CD8-positive, alpha-beta T cell (primary cell): ENCODE measurements at regions of chr15 and their contacts with region 1.

Region 1: DNA sequence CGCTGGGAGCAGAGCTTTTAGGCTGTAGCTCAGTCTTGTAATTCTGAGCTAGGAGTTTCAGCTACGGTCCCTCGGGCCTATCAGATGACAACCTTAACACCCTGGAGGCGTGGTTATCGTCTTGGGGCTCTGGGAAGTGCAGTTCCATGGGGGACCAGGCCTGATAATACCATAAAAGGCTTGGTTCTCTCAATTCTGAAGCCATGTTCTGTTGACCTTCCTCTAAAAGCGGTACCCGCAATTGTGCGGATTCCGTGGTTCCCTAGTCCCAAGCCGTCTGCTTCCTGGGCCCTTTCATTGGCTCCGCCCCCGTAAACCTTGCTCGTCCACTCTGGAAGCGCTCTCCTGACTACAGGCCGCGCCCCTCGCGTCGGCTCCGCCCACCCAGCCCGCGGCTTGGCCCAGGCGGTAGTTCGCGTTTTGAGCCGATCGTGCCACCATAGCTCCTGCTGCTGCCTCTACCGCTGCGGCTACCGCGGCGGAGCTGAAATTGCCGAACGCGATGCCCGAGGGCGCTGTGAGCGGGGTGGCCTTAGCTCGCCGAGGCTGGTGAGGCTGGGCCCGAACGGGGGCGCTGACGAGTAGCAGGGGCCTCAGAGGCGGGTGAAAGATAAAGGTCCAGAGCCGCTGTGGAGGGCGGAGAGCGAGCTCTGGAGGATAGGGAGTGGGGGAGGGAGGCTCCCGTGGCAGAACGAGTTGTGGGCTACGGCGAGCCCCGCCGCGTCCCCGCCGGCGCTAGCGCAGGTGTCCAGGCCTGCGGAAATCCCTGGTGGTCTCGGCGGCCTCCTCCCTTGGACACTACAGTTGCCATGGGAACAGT is at the start of gene MAPKBP1:
- DNase-seq: peak; percentile 93 to 100 (median 97)
- ATAC-seq: peak; percentile 90
- H3K4me3 ChIP-seq: peak within 1 kb of the TSS; percentile 70 to 91
- H3K4me3 Mint-ChIP-seq: peak within 1 kb of the TSS; percentile 95
- H3K27ac ChIP-seq: peak within 1 kb of the TSS; percentile 45 to 84
- H3K27ac Mint-ChIP-seq: peak within 1 kb of the TSS; percentile 95
- H3K4me1 ChIP-seq: peaks cover 46% of the 10 kb centered on the region
- H3K4me1 Mint-ChIP-seq: peaks cover 60% of the 10 kb centered on the region
- H3K27me3 ChIP-seq: no peaks in the 10 kb centered on the region
- H3K27me3 Mint-ChIP-seq: no peaks in the 10 kb centered on the region
- CTCF ChIP-seq: peak; percentile 47
- total RNA-seq, gene MAPKBP1: 24.2 to 25.3 TPM

Region 2: GRCh38 chr15:41557673-41558399 is 216.4 kb before region 1 on chr15:
- CTCF ChIA-PET with region 1: interaction called, 3 read pairs
- POLR2A ChIA-PET with region 1: no interaction called
- intact Hi-C with region 1: loop called (anchors 1 to 5 kb)
- DNase-seq: peak; percentile 47 to 90 (median 77)
- ATAC-seq: peak; percentile 88
- H3K4me3 ChIP-seq: peak overlapping the region; percentile 4 to 41
- H3K4me3 Mint-ChIP-seq: peak overlapping the region; percentile 86
- H3K27ac ChIP-seq: peak overlapping the region in 1 of 2 experiments; percentile 69
- H3K27ac Mint-ChIP-seq: peak overlapping the region; percentile 84
- H3K4me1 ChIP-seq: peaks cover 19% of the 10 kb centered on the region
- H3K4me1 Mint-ChIP-seq: peaks cover 14% of the 10 kb centered on the region
- H3K27me3 ChIP-seq: peaks cover 6 to 10% of the 10 kb centered on the region in 2 experiments
- H3K27me3 Mint-ChIP-seq: peaks cover 18% of the 10 kb centered on the region
- CTCF ChIP-seq: peak; percentile 88

Region 3: GRCh38 chr15:41594801-41595746 is 179.2 kb before region 1 on chr15:
- CTCF ChIA-PET with region 1: no interaction called
- POLR2A ChIA-PET with region 1: no interaction called
- intact Hi-C with region 1: no loop called
- DNase-seq: no peak
- ATAC-seq: no peak
- H3K4me3 ChIP-seq: no peak overlapping the region
- H3K4me3 Mint-ChIP-seq: no peak overlapping the region
- H3K27ac ChIP-seq: no peak overlapping the region
- H3K27ac Mint-ChIP-seq: no peak overlapping the region
- H3K4me1 ChIP-seq: no peaks in the 10 kb centered on the region
- H3K4me1 Mint-ChIP-seq: no peaks in the 10 kb centered on the region
- H3K27me3 ChIP-seq: no peaks in the 10 kb centered on the region
- H3K27me3 Mint-ChIP-seq: peaks cover 12% of the 10 kb centered on the region
- CTCF ChIP-seq: no peak

Region 4: DNA sequence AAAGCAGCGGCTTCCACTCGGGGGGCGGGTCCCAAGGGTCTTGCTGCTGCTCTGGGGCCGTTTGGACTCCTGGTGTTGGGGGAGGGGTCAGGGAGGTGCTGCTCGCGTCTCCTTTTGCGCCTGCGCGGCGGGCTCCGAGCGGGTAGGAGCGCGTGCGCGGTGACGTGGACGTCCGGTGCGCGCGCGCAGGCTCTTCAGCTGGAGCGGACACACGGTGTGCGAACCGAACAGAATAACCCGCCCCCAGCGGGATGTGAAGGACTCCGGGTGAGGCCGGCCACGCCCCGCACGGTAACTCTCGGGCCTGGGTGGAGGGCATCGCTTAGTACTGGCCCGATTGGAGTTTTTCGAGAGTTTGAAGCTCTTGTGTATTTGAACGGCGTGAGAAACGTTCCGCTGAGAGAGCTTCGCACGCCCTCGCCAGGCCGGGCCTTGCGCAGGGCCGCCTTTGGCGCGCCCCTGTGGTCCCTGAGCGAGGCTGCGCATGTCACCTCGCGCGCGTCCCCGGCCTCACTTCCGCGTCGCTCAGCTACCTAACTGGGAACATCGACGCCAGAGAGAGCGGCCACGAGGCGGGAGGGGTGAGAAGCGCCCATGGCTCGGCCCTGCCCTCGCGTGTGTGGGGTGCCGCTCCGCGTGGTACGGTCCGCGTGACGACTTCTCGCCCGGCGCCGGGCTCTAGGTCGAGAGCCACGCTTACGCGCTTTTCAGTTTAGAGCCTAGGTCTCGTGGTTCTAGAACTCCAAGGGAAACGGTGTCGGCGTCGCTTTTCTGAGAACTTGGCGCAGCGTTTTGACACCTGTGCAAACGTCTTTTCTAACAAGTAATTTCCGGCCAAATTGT is 113.8 kb before region 1 on chr15 and contains the start of gene MGA:
- CTCF ChIA-PET with region 1: interaction called, 5 read pairs
- POLR2A ChIA-PET with region 1: interaction called, 4 read pairs
- intact Hi-C with region 1: loop called in 1 of 2 experiments (anchors 1 kb)
- DNase-seq: peak; percentile 74 to 95 (median 89)
- ATAC-seq: peak; percentile 79
- H3K4me3 ChIP-seq: peak within 1 kb of the TSS; percentile 56 to 62
- H3K4me3 Mint-ChIP-seq: peak within 1 kb of the TSS; percentile 86
- H3K27ac ChIP-seq: peak within 1 kb of the TSS; percentile 90 to 98
- H3K27ac Mint-ChIP-seq: peak within 1 kb of the TSS; percentile 89
- H3K4me1 ChIP-seq: peaks cover 31% of the 10 kb centered on the region
- H3K4me1 Mint-ChIP-seq: peaks cover 54% of the 10 kb centered on the region
- H3K27me3 ChIP-seq: peaks cover 0 to 3% of the 10 kb centered on the region in 2 experiments
- H3K27me3 Mint-ChIP-seq: no peaks in the 10 kb centered on the region
- CTCF ChIP-seq: no peak
- total RNA-seq, gene MGA: 32.9 to 35.7 TPM

Region 5: DNA sequence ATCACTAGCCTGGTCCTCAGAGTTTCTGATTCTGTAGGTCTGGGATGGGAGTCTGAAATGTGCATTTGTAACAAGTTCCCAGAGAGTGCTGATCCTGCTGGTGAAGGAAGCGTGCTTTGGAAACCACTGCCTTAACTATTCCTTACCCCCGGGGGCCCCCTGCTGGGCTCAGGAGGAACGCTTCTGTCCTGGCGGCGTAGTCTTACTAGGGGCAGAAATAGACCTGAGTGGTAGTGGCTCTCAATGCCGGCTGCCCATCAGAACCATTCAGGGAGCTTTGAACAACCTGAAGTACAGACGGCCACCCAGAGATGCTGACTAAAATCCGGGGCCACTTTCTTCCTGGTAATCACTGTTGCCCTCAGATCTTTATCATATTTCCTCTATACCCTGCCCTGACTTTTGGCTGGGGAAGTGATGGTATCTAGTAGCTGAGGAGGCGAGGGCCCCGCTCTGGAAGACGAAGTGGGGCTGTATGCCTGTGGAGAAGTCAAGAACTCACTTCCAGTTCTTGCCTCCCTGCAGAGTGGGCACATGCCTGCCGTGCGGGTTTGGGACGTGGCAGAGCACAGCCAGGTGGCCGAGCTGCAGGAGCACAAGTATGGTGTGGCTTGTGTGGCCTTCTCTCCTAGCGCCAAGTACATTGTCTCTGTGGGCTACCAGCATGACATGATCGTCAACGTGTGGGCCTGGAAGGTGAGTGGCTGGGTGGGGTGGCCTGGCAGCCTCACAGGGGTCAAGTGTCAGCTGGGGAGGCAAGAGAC is 37.3 kb after region 1 on chr15:
- CTCF ChIA-PET with region 1: interaction called, 314 read pairs
- POLR2A ChIA-PET with region 1: interaction called, 31 read pairs
- intact Hi-C with region 1: loop called (anchors 1 kb)
- DNase-seq: peak; percentile 53 to 82 (median 77)
- ATAC-seq: peak; percentile 98
- H3K4me3 ChIP-seq: no peak overlapping the region
- H3K4me3 Mint-ChIP-seq: no peak overlapping the region
- H3K27ac ChIP-seq: no peak overlapping the region
- H3K27ac Mint-ChIP-seq: peak overlapping the region; percentile 14
- H3K4me1 ChIP-seq: peaks cover 17% of the 10 kb centered on the region
- H3K4me1 Mint-ChIP-seq: peaks cover 16% of the 10 kb centered on the region
- H3K27me3 ChIP-seq: no peaks in the 10 kb centered on the region
- H3K27me3 Mint-ChIP-seq: no peaks in the 10 kb centered on the region
- CTCF ChIP-seq: peak; percentile 86

Region 6: DNA sequence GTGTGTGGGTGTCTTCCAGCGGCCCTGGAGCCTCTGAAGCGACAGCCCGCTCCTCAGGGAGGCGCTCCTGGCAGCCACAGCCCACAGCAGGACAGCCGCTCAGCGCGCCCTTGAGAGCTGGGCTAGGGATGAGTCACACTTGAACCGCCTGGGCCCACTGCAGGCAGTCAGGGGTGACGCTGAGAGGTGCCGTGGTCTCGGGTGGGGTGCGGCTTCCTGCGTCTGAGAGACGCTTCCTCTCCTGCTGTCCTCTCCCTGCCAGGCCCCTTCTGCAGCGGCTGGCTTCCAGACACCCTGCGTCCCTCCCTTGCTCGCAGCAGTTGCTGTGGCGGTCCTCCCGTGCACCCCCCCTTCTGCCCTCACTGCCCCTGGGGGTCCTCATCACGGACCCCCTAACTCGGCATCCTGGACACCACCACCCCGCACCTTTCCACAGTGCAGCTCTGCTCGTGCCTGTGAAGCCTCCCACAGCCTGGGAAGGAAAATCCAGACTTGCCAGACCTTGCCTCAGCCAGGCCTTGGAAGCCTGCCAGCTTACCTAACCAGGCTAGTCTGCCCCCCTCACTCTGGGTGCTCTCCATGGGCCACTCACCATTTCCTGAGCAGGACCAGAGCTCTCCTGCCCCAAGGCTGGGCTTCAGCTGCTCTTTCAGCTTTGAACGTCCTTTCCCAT is 120.7 kb after region 1 on chr15:
- CTCF ChIA-PET with region 1: interaction called, 113 read pairs
- POLR2A ChIA-PET with region 1: interaction called, 12 read pairs
- intact Hi-C with region 1: loop called in 1 of 2 experiments (anchors 2 kb)
- DNase-seq: peak; percentile 82 to 96 (median 94)
- ATAC-seq: peak; percentile 95
- H3K4me3 ChIP-seq: peak overlapping the region; percentile 45 to 53
- H3K4me3 Mint-ChIP-seq: peak overlapping the region; percentile 78
- H3K27ac ChIP-seq: peak overlapping the region; percentile 80 to 95
- H3K27ac Mint-ChIP-seq: peak overlapping the region; percentile 98
- H3K4me1 ChIP-seq: peaks cover 30% of the 10 kb centered on the region
- H3K4me1 Mint-ChIP-seq: peaks cover 36% of the 10 kb centered on the region
- H3K27me3 ChIP-seq: no peaks in the 10 kb centered on the region
- H3K27me3 Mint-ChIP-seq: no peaks in the 10 kb centered on the region
- CTCF ChIP-seq: no peak

Region 7: DNA sequence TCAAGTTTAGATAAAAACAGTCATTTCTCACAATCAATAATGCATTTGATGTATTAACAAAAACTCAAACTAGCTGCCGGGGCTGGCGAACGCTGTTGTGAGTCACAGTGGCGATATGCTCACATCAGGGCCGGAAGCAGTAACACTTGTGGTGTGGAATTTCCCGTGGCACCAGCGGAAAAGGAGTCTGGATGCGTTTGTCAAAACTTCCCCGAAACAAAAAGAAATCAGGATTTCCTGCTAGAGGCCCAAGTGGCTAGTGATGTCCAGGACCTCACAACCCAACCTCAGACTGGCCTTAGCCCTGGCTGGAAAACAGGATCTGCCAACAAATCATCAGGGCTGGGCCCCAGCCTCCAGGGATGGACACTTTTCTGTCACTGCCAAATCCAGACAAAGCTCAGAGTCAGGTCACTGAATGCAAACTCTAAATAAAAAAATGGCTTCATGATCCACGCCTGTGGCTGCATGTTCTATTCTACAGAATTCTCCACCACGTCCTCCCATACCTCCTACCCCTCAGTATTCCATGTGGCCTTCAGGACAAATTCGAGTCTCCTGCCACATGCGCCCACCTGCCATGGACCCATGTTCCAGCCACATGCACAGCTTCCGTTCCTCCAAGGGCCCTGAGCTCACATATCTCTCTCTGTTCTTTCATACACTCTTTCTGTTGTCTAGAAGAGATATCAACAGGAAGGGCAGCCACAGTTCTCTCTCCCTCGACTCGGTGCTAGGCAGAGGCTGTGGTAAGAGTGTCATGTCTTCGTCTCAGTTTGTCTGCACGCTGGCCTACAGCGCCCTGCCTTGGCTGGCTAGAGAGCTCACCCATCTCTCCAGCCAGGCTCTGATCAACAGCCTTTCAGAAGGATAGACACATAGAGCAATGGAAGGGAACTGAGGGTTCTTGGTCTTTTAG is 162.6 kb after region 1 on chr15:
- CTCF ChIA-PET with region 1: interaction called, 34 read pairs
- POLR2A ChIA-PET with region 1: interaction called, 19 read pairs
- intact Hi-C with region 1: loop called (anchors 1 to 10 kb)
- DNase-seq: peak; percentile 52 to 94 (median 74)
- ATAC-seq: peak; percentile 80
- H3K4me3 ChIP-seq: peak overlapping the region; percentile 9 to 27
- H3K4me3 Mint-ChIP-seq: peak overlapping the region; percentile 75
- H3K27ac ChIP-seq: peak overlapping the region; percentile 86 to 97
- H3K27ac Mint-ChIP-seq: peak overlapping the region; percentile 96
- H3K4me1 ChIP-seq: peaks cover 55% of the 10 kb centered on the region
- H3K4me1 Mint-ChIP-seq: peaks cover 58% of the 10 kb centered on the region
- H3K27me3 ChIP-seq: no peaks in the 10 kb centered on the region
- H3K27me3 Mint-ChIP-seq: no peaks in the 10 kb centered on the region
- CTCF ChIP-seq: peak; percentile 39

Region 8: DNA sequence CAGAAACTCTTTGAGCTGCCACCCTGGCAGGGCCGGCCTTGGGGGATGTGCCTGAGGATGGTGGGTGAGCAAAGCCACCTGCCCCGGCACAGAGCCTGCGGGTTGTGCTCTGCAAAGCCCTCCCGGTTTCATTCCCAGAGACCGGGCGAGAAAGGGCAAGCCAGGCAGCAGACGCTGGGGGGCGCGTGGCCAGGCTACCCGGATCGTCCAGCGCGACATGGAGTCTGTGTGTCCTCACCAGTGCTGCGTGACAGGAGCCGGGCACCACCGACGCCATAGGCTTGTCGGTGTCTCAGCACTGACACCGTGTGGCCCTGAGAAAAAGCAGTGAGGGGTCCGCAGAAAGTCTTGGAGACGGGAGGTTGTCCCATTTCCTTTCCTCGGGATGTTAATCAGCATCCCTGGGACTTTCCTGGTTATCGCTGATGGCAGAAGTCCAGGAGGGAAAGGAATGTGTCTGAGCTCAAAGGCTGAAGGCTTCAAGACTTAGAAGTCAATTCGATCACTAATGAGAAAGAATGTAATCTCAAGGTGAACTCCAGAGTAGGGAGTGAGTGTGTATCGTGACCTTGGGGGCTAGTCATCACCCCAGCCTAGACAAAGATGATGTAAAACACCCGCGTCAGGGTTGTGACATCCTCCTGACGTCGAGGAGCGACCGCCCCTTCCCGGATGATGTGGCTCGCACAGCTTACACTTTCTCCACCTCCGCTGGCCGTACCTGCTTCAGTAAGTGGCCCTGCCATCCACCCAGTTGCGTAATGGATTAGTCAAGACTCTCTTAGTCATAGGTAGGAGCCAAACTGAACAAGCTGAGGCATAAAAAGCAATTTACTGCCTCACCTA is 282.9 kb after region 1 on chr15:
- CTCF ChIA-PET with region 1: interaction called, 4 read pairs
- POLR2A ChIA-PET with region 1: no interaction called
- intact Hi-C with region 1: loop called (anchors 1 kb)
- DNase-seq: peak in 6 of 9 experiments; percentile 32 to 76 (median 62)
- ATAC-seq: peak; percentile 78
- H3K4me3 ChIP-seq: peak overlapping the region; percentile 34 to 45
- H3K4me3 Mint-ChIP-seq: peak overlapping the region; percentile 64
- H3K27ac ChIP-seq: peak overlapping the region in 1 of 2 experiments; percentile 4
- H3K27ac Mint-ChIP-seq: peak overlapping the region; percentile 85
- H3K4me1 ChIP-seq: no peaks in the 10 kb centered on the region
- H3K4me1 Mint-ChIP-seq: peaks cover 7% of the 10 kb centered on the region
- H3K27me3 ChIP-seq: no peaks in the 10 kb centered on the region
- H3K27me3 Mint-ChIP-seq: peaks cover 29% of the 10 kb centered on the region
- CTCF ChIP-seq: peak; percentile 41

Region 9: DNA sequence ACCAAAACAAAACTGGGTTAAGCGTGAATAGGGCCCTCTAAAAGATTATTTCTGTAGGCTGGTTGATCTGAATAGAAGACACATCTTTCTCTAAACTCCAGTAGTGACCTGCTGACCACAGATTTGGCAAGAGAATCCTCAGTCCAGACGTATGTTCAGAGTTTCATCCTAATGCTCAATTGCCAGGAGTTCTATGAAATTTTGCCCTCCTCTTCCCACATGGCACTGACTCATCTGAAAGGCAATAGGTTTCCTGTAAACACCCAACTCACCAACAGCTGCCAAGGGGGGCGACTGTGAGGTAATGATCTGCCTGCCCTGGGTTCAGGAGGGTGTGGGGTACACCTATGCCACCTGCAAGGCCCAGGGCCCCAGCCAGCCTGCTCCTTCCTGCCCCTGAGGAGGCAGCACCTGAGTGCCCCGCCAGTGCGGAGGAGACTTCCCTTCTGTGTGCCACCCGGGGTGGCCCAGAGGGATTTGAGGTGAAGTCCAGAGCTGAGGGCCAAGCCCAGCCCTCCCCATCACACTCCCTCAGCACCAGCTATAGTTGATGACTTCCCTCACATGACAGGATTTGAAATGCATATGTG is 328.5 kb after region 1 on chr15:
- CTCF ChIA-PET with region 1: no interaction called
- POLR2A ChIA-PET with region 1: no interaction called
- intact Hi-C with region 1: no loop called
- DNase-seq: no peak
- ATAC-seq: no peak
- H3K4me3 ChIP-seq: no peak overlapping the region
- H3K4me3 Mint-ChIP-seq: no peak overlapping the region
- H3K27ac ChIP-seq: no peak overlapping the region
- H3K27ac Mint-ChIP-seq: no peak overlapping the region
- H3K4me1 ChIP-seq: no peaks in the 10 kb centered on the region
- H3K4me1 Mint-ChIP-seq: peaks cover 4% of the 10 kb centered on the region
- H3K27me3 ChIP-seq: no peaks in the 10 kb centered on the region
- H3K27me3 Mint-ChIP-seq: peaks cover 12% of the 10 kb centered on the region
- CTCF ChIP-seq: no peak